ENCODE measurements at regions of chr6 and their contacts with region 1.

Region 1: DNA sequence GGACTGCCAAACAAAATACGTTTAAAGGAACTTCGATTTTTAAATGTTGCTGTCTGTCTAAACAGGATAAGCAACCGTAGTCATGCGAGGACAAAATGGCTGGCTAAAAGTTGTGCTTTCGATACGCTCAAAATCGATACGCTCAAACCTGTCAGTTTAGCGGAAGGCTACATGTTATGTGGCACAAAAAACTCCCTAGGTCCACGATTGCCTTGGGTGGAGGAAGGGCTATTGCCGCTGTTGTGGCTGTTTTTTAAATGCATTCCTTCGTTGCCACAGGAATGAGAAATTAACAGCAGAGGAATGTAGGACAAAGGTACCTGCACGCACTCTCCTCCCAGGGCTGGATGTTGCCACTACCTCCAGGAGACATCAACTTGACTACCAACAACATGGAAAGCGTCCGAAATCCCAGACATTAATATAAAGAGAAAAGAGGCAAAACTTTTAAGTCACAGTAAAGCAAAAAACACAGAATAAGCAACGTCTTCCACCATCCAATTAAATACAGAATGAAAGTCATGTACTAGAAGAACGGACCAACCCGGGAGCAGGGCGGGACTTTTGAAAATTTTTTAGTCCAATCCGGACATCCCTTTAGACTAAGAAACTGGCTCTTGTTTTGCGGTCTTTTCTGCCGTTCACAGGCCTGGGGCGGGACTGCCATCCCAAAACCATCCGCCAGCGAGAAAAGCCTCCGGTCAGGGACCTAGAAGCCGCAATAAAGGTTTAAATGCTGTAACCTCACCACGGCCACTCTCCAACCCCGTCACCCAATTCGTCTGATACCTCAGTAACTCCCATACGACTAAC is 32.2 kb upstream of the HFE start:
- DNase-seq: peak; percentile 86
- H3K4me3 ChIP-seq: peak overlapping the region; percentile 72
- CTCF ChIP-seq: no peak

Region 2: DNA sequence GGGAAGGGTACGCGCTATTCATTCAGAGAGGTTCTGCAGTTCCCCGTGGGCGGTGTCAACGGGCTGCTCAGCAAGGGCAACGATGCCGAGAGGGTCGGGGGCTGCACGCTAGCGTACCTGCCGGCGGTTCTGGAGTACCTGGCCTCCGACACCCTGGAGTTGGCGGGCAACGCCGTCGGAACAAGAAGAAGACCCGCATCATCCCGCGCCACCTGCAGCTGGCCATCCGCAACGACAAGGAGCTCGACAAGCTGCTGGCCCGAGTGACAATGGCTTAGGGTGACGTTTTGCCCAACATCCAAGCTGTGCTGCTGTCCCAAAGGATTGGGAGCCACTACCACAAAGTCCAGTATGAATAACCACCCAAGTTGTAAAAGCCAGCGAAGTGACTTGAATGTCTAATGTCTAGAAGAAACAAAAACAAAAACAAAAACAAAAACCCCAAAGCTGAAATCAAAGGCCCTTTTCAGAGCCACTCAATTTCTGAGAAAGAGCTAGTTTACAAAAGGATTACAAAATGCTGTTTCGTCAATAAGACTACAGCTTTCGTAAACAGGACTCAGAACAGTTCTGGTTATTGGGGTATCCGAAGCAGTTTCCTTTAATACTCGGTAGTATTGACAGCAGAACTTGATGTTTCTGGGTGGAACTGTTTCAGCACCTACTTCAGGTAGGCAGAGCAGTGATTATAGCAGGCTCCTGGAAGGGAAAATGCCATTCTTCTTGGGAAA is 322.4 kb before region 1 on chr6:
- CTCF ChIA-PET with region 1: no interaction called
- POLR2A ChIA-PET with region 1: no interaction called
- DNase-seq: no peak
- H3K4me3 ChIP-seq: no peak overlapping the region
- CTCF ChIP-seq: no peak

Region 3: DNA sequence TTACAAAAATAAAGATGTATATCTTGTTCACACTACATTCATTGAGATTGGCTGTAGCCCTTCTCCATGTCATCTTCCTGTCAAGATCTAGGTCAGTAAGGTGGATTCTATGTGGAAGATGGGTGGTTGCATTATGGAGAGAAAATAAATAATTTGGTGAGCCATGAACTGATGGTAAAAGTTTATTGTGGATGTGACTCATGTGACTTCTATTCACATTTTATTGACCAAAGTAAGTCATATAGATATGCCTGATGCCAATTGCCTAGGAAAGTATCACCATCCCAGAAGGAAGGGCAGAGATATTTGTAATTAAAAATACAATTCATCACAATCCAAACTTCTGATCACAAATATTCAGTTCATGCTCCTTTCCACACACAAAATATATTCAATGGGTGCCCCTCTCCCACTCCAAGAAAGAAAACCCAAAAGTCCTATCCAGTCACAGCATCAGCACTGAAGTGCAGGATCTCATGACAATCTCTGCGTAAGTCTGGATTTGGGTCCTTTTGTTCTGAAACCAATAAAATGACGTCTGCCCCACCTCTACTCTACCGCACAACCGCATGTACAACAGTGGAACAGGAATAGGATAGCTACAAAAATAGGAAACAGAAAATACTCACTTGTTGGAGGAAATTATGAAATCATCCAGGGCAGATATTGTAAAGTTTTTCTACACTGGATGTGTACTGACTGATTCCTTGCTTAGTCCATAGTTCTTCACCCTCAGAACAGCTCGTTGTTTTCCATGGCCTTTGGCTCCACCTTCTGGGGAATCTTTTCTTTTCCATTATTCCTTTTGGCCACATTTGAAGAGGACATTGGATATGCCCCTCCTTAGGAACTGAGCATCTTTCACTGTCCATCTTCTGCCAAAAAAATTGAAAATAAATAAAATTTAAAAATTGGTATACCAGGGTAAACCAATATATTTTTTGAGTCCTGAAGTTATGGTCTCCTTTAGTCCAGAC is 164.9 kb before region 1 on chr6:
- CTCF ChIA-PET with region 1: no interaction called
- POLR2A ChIA-PET with region 1: no interaction called
- DNase-seq: no peak
- H3K4me3 ChIP-seq: no peak overlapping the region
- CTCF ChIP-seq: peak; percentile 12

Region 4: DNA sequence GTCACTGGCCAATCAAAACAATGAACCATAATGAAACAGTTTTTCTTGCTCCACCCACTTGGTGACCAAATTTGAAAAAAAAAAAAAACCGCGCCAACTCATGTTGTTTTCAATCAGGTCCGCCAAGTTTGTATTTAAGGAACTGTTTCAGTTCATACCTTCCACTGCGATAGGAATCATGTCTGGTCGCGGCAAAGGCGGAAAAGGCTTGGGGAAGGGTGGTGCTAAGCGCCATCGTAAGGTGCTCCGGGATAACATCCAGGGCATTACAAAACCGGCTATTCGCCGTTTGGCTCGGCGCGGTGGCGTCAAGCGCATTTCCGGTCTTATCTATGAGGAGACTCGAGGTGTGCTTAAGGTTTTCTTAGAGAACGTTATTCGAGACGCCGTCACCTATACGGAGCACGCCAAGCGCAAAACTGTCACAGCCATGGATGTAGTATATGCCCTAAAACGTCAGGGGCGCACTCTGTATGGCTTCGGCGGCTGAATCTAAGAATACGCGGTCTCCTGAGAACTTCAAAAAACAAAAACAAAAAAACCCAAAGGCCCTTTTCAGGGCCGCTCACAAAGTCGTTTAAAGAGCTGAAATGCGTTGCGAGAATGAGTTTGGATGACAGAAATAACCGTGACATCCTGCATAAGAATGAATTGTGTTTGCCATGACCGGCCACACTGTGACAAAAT is 48.9 kb after region 1 on chr6:
- CTCF ChIA-PET with region 1: interaction called, 1,301 read pairs
- POLR2A ChIA-PET with region 1: no interaction called
- DNase-seq: peak; percentile 79
- H3K4me3 ChIP-seq: peak overlapping the region; percentile 65
- CTCF ChIP-seq: peak; percentile 41

Region 5: GRCh38 chr6:26163427-26164119 is 108.5 kb after region 1 on chr6:
- CTCF ChIA-PET with region 1: no interaction called
- POLR2A ChIA-PET with region 1: no interaction called
- DNase-seq: no peak
- H3K4me3 ChIP-seq: no peak overlapping the region
- CTCF ChIP-seq: no peak